ENCODE measurements at regions of chr7 and their contacts with region 1.

Region 1: GRCh38 chr7:129009437-129009836 is 45.5 kb downstream of the TNPO3 start:
- DNase-seq: peak; percentile 70
- ATAC-seq: peak; percentile 90
- H3K4me3 ChIP-seq: no peak overlapping the region
- H3K27ac ChIP-seq: peak overlapping the region; percentile 93
- H3K4me1 ChIP-seq: peaks cover 70% of the 10 kb centered on the region
- H3K27me3 ChIP-seq: no peaks in the 10 kb centered on the region
- CTCF ChIP-seq: no peak
- EP300 ChIP-seq: peak; percentile 66 to 90
- POLR2A ChIP-seq: no peak
- RAD21 ChIP-seq: no peak

Region 2: DNA sequence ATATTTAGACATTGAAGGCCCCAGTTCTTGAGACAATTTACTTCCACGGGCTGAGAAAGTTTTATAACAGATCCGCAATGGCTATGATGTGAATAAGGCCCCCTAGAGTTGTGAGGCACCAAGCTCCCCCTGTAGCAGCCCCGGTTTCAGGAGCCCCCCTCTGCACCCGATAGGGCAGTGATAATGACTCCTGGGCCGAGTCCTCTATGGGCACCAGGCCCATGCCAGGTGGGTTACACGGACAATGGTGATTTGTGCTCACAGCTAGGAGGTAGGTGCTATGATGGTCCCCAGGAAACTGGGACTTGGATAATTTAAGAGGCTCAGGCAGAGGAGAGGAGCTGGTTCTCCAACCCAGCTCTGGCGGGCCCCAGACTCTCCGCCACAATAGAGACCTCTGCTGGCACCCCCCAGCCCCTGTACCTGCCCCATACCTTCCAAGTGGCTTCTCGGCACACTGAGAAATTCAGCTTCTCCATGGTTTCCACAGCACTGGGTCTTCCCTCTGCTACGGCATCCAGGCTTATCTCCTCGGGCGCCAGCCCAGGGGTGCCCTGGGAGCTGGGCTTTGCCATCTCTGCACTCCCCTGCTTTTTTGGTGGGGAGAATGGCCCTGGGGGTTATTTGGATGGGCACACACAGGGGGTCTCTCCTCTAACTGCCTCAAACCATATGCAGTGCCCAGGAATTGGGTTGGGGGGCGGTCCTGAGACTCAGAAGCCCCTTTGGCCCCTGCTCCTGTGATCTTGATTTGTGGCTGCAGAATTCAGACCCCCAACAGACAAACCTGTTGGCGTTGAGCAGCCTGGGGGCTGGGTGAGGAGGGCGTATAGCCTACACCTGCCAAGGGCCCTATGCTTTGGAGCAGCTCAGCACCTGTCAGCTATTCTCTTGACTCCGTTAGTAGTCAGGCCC is 86.7 kb before region 1 on chr7:
- CTCF ChIA-PET with region 1: no interaction called
- POLR2A ChIA-PET with region 1: no interaction called
- RAD21 ChIA-PET with region 1: no interaction called
- SMC1A ChIA-PET with region 1: no interaction called
- in situ Hi-C with region 1: no loop called
- intact Hi-C with region 1: no loop called
- DNase-seq: no peak
- ATAC-seq: no peak
- H3K4me3 ChIP-seq: no peak overlapping the region
- H3K27ac ChIP-seq: no peak overlapping the region
- H3K4me1 ChIP-seq: no peaks in the 10 kb centered on the region
- H3K27me3 ChIP-seq: no peaks in the 10 kb centered on the region
- CTCF ChIP-seq: no peak
- EP300 ChIP-seq: no peak
- POLR2A ChIP-seq: no peak
- RAD21 ChIP-seq: no peak

Region 3: GRCh38 chr7:128982105-128982504 is 27.3 kb before region 1 on chr7:
- CTCF ChIA-PET with region 1: interaction called, 4 read pairs
- POLR2A ChIA-PET with region 1: no interaction called
- RAD21 ChIA-PET with region 1: no interaction called
- SMC1A ChIA-PET with region 1: interaction called, 10 read pairs
- in situ Hi-C with region 1: no loop called
- intact Hi-C with region 1: no loop called
- DNase-seq: no peak
- ATAC-seq: no peak
- H3K4me3 ChIP-seq: no peak overlapping the region
- H3K27ac ChIP-seq: no peak overlapping the region
- H3K4me1 ChIP-seq: no peaks in the 10 kb centered on the region
- H3K27me3 ChIP-seq: no peaks in the 10 kb centered on the region
- CTCF ChIP-seq: no peak
- EP300 ChIP-seq: no peak
- POLR2A ChIP-seq: no peak
- RAD21 ChIP-seq: no peak

Region 4: DNA sequence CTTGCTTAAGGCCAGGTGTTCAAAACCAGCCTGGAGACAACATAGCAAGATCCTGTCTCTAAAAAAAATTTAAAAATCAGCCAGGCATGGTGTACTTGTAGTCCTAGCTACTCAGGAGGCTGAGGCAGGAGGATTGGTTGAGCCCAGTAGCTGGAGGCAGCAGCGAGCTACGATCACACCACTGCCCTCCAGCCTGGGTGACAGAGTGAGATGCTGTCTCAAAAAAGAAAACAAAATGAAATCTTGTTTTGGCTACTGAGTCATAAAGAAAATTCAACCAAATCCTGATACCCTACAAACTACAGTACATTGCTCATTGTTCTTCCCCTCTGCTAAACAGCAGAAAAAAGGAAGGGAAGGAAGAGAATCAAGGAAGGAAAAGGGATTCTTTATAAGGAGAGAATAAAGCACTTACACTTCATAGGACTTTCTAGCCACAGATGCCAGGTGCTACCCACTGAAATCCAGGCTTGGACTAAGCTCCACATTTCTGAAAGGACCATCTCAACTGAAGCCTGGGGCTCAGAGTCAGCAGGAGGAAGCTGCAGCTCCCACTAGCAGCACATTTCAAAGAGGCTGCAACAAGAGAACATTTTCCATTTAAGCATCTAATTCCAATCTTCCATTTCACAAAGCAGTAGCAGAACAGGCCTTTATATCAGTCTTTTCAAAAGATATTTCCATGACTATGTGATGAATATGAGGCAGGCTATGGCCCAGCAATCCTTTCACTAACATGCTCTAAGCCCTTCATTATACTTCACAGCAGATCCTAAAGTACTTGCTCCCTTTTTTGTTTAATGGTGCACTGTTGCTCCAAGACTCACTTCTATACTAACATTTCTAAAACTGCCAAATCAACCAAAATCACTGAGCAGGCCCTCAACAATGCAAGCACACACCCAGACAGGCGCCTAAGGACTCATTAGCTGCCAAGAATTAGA is 32.0 kb after region 1 on chr7:
- CTCF ChIA-PET with region 1: no interaction called
- POLR2A ChIA-PET with region 1: interaction called, 7 read pairs
- RAD21 ChIA-PET with region 1: interaction called, 7 read pairs
- SMC1A ChIA-PET with region 1: interaction called, 14 read pairs
- in situ Hi-C with region 1: no loop called
- intact Hi-C with region 1: no loop called
- DNase-seq: no peak
- ATAC-seq: peak; percentile 44
- H3K4me3 ChIP-seq: no peak overlapping the region
- H3K27ac ChIP-seq: peak overlapping the region; percentile 10; the same call in 1 of the 2 replicates
- H3K4me1 ChIP-seq: peaks cover 38% of the 10 kb centered on the region
- H3K27me3 ChIP-seq: no peaks in the 10 kb centered on the region
- CTCF ChIP-seq: no peak
- EP300 ChIP-seq: no peak
- POLR2A ChIP-seq: no peak
- RAD21 ChIP-seq: no peak

Region 5: GRCh38 chr7:129066290-129067131 is 57.1 kb after region 1 on chr7:
- CTCF ChIA-PET with region 1: interaction called, 14 read pairs
- POLR2A ChIA-PET with region 1: interaction called, 5 read pairs
- RAD21 ChIA-PET with region 1: interaction called, 17 read pairs
- SMC1A ChIA-PET with region 1: interaction called, 19 read pairs
- in situ Hi-C with region 1: no loop called
- intact Hi-C with region 1: no loop called
- DNase-seq: no peak
- ATAC-seq: peak; percentile 35
- H3K4me3 ChIP-seq: no peak overlapping the region
- H3K27ac ChIP-seq: no peak overlapping the region
- H3K4me1 ChIP-seq: no peaks in the 10 kb centered on the region
- H3K27me3 ChIP-seq: no peaks in the 10 kb centered on the region
- CTCF ChIP-seq: no peak
- EP300 ChIP-seq: no peak
- POLR2A ChIP-seq: no peak
- RAD21 ChIP-seq: no peak